Colonic mucosa (tissue), 4 donors: ENCODE measurements at regions of chr5 and their contacts with region 1.

Region 1: GRCh38 chr5:122295138-122295537 is 16.9 kb upstream of the SNCAIP start:
- DNase-seq: no peak
- H3K4me3 ChIP-seq: no peak overlapping the region
- H3K27ac ChIP-seq: no peak overlapping the region
- H3K4me1 ChIP-seq: no peaks in the 10 kb centered on the region
- H3K27me3 ChIP-seq: no peaks in the 10 kb centered on the region
- CTCF ChIP-seq: peak; percentile 13

Region 2: GRCh38 chr5:122415030-122415800 is 120.1 kb after region 1 on chr5:
- intact Hi-C with region 1: loop called (anchors 10 kb)
- DNase-seq: peak; percentile 57
- H3K4me3 ChIP-seq: no peak overlapping the region
- H3K27ac ChIP-seq: no peak overlapping the region
- H3K4me1 ChIP-seq: no peaks in the 10 kb centered on the region
- H3K27me3 ChIP-seq: no peaks in the 10 kb centered on the region
- CTCF ChIP-seq: peak; percentile 70